ENCODE measurements at regions of chr19 and their contacts with region 1.

Region 1: DNA sequence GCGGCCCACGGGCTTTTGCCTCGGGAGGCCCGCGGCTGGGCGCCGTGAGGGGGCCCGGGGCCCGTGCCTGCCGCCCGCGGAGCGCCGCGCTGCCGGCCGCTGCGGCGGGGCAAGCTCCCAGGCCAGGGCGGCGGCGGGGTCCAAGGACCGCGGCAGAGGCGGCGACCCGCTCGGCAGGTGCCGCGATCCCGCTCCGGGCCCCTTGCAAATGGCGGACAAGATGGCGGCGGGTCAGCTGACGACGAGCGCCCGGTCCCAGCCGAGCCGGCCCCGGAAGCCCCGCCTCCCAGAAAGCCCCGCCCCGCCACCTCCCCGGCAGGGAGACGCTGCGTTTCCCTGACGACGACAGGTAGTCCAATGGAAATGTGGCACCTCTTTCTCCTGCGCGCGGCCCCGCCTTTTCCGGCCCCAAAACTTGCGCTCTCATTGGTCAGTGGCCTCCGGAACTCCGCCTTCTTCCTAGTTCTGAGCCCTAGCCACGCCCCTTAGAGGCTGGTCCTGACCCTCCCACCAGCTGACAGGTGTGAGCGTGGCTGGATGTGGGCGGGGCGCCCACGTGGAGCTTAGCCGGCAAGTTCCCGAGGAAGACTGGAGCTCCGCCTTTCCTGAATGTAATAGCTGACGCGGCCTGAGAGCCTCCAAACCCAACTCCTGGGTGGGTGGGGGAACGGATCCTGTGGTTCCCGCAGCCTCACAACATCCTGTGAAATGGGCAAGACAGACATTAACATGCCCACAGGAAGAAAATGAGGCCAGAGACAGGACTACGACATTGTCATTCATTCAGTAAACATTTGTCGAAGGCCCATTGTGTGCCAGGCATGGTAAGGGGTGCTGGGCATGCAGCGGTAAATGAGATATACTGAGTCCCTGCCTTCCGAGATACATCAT is at the start of gene AP3D1:
- DNase-seq: peak; percentile 100
- ATAC-seq: peak; percentile 90
- H3K4me3 Mint-ChIP-seq: peak within 1 kb of the TSS; percentile 81
- H3K27ac Mint-ChIP-seq: peak within 1 kb of the TSS; percentile 89
- H3K4me1 Mint-ChIP-seq: peaks cover 42% of the 10 kb centered on the region
- H3K27me3 Mint-ChIP-seq: no peaks in the 10 kb centered on the region
- total RNA-seq, gene AP3D1: 82.7 to 105 TPM

Region 2: GRCh38 chr19:1747285-1748114 is 404.1 kb before region 1 on chr19:
- CTCF ChIA-PET with region 1: no interaction called
- POLR2A ChIA-PET with region 1: no interaction called
- intact Hi-C with region 1: no loop called
- DNase-seq: peak; percentile 75
- ATAC-seq: peak; percentile 68
- H3K4me3 Mint-ChIP-seq: no peak overlapping the region
- H3K27ac Mint-ChIP-seq: no peak overlapping the region
- H3K4me1 Mint-ChIP-seq: peaks cover 11% of the 10 kb centered on the region
- H3K27me3 Mint-ChIP-seq: peaks cover 35% of the 10 kb centered on the region

Region 3: GRCh38 chr19:1884719-1885334 is 266.8 kb before region 1 on chr19:
- CTCF ChIA-PET with region 1: no interaction called
- POLR2A ChIA-PET with region 1: no interaction called
- intact Hi-C with region 1: loop called in 1 of 2 experiments (anchors 5 kb)
- DNase-seq: peak; percentile 32
- ATAC-seq: peak; percentile 1
- H3K4me3 Mint-ChIP-seq: peak overlapping the region; percentile 97
- H3K27ac Mint-ChIP-seq: peak overlapping the region; percentile 98
- H3K4me1 Mint-ChIP-seq: peaks cover 31% of the 10 kb centered on the region
- H3K27me3 Mint-ChIP-seq: no peaks in the 10 kb centered on the region

Region 4: GRCh38 chr19:2016041-2016807 is 135.4 kb before region 1 on chr19:
- CTCF ChIA-PET with region 1: interaction called, 4 read pairs
- POLR2A ChIA-PET with region 1: no interaction called
- intact Hi-C with region 1: loop called (anchors 1 to 5 kb)
- DNase-seq: peak; percentile 85
- ATAC-seq: peak; percentile 77
- H3K4me3 Mint-ChIP-seq: peak overlapping the region; percentile 66
- H3K27ac Mint-ChIP-seq: peak overlapping the region; percentile 58
- H3K4me1 Mint-ChIP-seq: peaks cover 21% of the 10 kb centered on the region
- H3K27me3 Mint-ChIP-seq: no peaks in the 10 kb centered on the region

Region 5: GRCh38 chr19:2041683-2042484 is 109.7 kb before region 1 on chr19:
- CTCF ChIA-PET with region 1: no interaction called
- POLR2A ChIA-PET with region 1: no interaction called
- intact Hi-C with region 1: loop called (anchors 1 to 5 kb)
- DNase-seq: peak; percentile 100
- ATAC-seq: peak; percentile 88
- H3K4me3 Mint-ChIP-seq: peak overlapping the region; percentile 73
- H3K27ac Mint-ChIP-seq: peak overlapping the region; percentile 88
- H3K4me1 Mint-ChIP-seq: peaks cover 17% of the 10 kb centered on the region
- H3K27me3 Mint-ChIP-seq: no peaks in the 10 kb centered on the region

Region 6: DNA sequence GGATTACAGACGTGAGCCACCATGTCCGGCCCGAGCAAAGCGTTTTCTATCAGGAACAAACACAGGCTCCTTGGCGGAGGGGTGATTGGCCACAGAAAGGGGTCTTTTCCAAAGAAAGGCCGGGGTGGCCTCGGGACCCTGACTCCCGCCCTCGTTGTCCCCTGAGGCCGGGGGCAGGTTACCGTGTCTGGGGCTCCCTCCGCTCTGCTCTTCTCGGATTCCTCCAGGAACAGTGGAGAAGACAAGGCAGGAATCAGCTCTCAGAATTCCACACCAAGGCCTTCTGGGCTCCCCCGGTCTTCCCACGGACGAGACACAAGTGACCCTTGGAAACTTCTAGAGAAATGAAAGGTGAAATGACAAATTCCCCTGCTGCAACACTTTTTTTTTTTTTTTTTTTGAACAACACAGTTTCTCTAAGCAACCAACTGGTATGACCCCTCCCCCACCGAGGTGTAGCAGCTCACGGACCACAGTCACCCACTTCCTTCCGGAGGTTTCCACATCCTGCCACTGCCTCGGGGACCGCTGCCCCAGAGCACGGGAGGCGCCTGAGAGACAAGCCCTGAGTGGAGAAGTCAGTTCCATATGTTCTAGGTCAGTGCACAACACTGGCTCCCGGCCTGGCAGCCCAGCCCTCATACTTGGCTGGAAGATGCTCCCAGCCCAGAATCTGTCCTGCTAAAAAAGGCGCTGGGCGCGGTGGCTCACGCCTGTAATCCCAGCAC is 66.4 kb before region 1 on chr19:
- CTCF ChIA-PET with region 1: interaction called, 4 read pairs
- POLR2A ChIA-PET with region 1: no interaction called
- intact Hi-C with region 1: loop called in 1 of 2 experiments (anchors 2 kb)
- DNase-seq: peak; percentile 97
- ATAC-seq: peak; percentile 64
- H3K4me3 Mint-ChIP-seq: peak overlapping the region; percentile 96
- H3K27ac Mint-ChIP-seq: peak overlapping the region; percentile 99
- H3K4me1 Mint-ChIP-seq: peaks cover 57% of the 10 kb centered on the region
- H3K27me3 Mint-ChIP-seq: no peaks in the 10 kb centered on the region

Region 7: GRCh38 chr19:2328401-2329148 is 177.0 kb after region 1 on chr19 and contains the starts of genes LSM7 and SPPL2B:
- CTCF ChIA-PET with region 1: no interaction called
- POLR2A ChIA-PET with region 1: no interaction called
- intact Hi-C with region 1: loop called in 1 of 2 experiments (anchors 1 kb)
- DNase-seq: peak; percentile 95
- ATAC-seq: peak; percentile 78
- H3K4me3 Mint-ChIP-seq: peak within 1 kb of the TSS; percentile 98
- H3K27ac Mint-ChIP-seq: peak within 1 kb of the TSS; percentile 99
- H3K4me1 Mint-ChIP-seq: peaks cover 69% of the 10 kb centered on the region
- H3K27me3 Mint-ChIP-seq: no peaks in the 10 kb centered on the region
- total RNA-seq, gene LSM7: 113 to 134 TPM
- total RNA-seq, gene SPPL2B: 37.7 to 48.5 TPM

Region 8: GRCh38 chr19:2427429-2428320 is 276.1 kb after region 1 on chr19 and contains the start of gene TIMM13:
- CTCF ChIA-PET with region 1: no interaction called
- POLR2A ChIA-PET with region 1: no interaction called
- intact Hi-C with region 1: loop called in 1 of 2 experiments (anchors 1 kb)
- DNase-seq: peak; percentile 98
- ATAC-seq: peak; percentile 95
- H3K4me3 Mint-ChIP-seq: peak within 1 kb of the TSS; percentile 86
- H3K27ac Mint-ChIP-seq: peak within 1 kb of the TSS; percentile 96
- H3K4me1 Mint-ChIP-seq: peaks cover 5% of the 10 kb centered on the region
- H3K27me3 Mint-ChIP-seq: no peaks in the 10 kb centered on the region
- total RNA-seq, gene TIMM13: 70.7 to 104 TPM

Measured in activated CD4-positive, alpha-beta T cell treated with anti-CD3 and anti-CD28 coated beads for 36 hours (primary cell).